Calu3 (cell line): ENCODE measurements at regions of chr12 and their contacts with region 1.

Region 1: GRCh38 chr12:97943364-97943763 is 480.8 kb downstream of the RMST start:
- DNase-seq: no peak
- H3K4me3 Mint-ChIP-seq: no peak overlapping the region
- H3K27ac Mint-ChIP-seq: peak overlapping the region; percentile 98
- H3K4me1 Mint-ChIP-seq: peaks cover 56% of the 10 kb centered on the region
- H3K27me3 Mint-ChIP-seq: no peaks in the 10 kb centered on the region
- CTCF ChIP-seq: no peak

Region 2: GRCh38 chr12:97148941-97149559 is 794.3 kb before region 1 on chr12:
- CTCF ChIA-PET with region 1: no interaction called
- intact Hi-C with region 1: loop called (anchors 1 kb)
- DNase-seq: peak; percentile 87
- H3K4me3 Mint-ChIP-seq: no peak overlapping the region
- H3K27ac Mint-ChIP-seq: no peak overlapping the region
- H3K4me1 Mint-ChIP-seq: no peaks in the 10 kb centered on the region
- H3K27me3 Mint-ChIP-seq: peaks cover 22% of the 10 kb centered on the region
- CTCF ChIP-seq: peak; percentile 81

Region 3: GRCh38 chr12:97568458-97569180 is 374.7 kb before region 1 on chr12:
- CTCF ChIA-PET with region 1: no interaction called
- intact Hi-C with region 1: loop called (anchors 2 kb)
- DNase-seq: peak; percentile 58
- H3K4me3 Mint-ChIP-seq: peak overlapping the region; percentile 60
- H3K27ac Mint-ChIP-seq: peak overlapping the region; percentile 99
- H3K4me1 Mint-ChIP-seq: peaks cover 60% of the 10 kb centered on the region
- H3K27me3 Mint-ChIP-seq: no peaks in the 10 kb centered on the region
- CTCF ChIP-seq: no peak

Region 4: GRCh38 chr12:97716356-97716755 is 227.0 kb before region 1 on chr12:
- CTCF ChIA-PET with region 1: no interaction called
- intact Hi-C with region 1: loop called (anchors 5 kb)
- DNase-seq: peak; percentile 30
- H3K4me3 Mint-ChIP-seq: no peak overlapping the region
- H3K27ac Mint-ChIP-seq: no peak overlapping the region
- H3K4me1 Mint-ChIP-seq: peaks cover 44% of the 10 kb centered on the region
- H3K27me3 Mint-ChIP-seq: no peaks in the 10 kb centered on the region
- CTCF ChIP-seq: peak; percentile 56

Region 5: DNA sequence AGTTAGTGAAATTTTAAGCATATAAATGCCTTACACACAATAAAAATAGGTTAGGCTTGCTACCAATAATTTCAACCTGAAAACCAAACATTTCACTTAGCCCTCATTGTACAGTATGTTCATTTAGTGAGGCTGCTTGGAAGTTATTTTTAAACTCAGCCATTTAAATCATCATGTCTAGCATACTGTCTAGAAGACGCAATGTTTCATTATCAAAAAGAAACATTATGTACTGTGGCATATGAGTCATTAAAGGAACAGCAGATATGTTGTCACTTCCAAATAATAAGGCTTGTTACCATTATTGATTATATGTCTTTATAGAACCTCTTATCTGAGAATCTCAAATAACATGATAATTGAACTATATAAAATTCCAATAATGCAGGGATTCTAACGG is 176.0 kb before region 1 on chr12:
- CTCF ChIA-PET with region 1: no interaction called
- intact Hi-C with region 1: loop called (anchors 5 kb)
- DNase-seq: no peak
- H3K4me3 Mint-ChIP-seq: no peak overlapping the region
- H3K27ac Mint-ChIP-seq: no peak overlapping the region
- H3K4me1 Mint-ChIP-seq: peaks cover 22% of the 10 kb centered on the region
- H3K27me3 Mint-ChIP-seq: no peaks in the 10 kb centered on the region
- CTCF ChIP-seq: no peak

Region 6: DNA sequence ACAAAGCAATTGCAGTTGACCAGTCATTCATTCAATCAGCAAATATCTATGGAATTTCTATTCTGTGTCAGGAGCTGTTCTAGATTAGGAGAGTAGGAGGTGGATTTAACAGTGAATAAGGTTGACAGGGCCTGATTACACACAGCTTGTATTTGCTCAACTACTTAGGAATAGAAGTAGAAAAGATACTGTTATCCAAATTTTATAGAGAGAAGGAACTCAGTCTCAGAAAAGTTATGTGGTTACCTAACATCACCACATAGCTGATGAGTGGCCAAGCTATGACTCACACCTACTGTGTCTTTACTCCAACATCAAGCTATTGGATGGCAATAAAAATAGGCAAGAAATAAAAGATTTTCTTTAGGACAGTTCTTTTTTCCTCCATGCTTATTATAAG is 106.0 kb before region 1 on chr12:
- CTCF ChIA-PET with region 1: no interaction called
- intact Hi-C with region 1: loop called (anchors 5 kb)
- DNase-seq: peak; percentile 24
- H3K4me3 Mint-ChIP-seq: no peak overlapping the region
- H3K27ac Mint-ChIP-seq: no peak overlapping the region
- H3K4me1 Mint-ChIP-seq: peaks cover 22% of the 10 kb centered on the region
- H3K27me3 Mint-ChIP-seq: no peaks in the 10 kb centered on the region
- CTCF ChIP-seq: no peak

Region 7: GRCh38 chr12:97995559-97995958 is 52.2 kb after region 1 on chr12:
- CTCF ChIA-PET with region 1: no interaction called
- intact Hi-C with region 1: no loop called
- DNase-seq: no peak
- H3K4me3 Mint-ChIP-seq: no peak overlapping the region
- H3K27ac Mint-ChIP-seq: no peak overlapping the region
- H3K4me1 Mint-ChIP-seq: no peaks in the 10 kb centered on the region
- H3K27me3 Mint-ChIP-seq: no peaks in the 10 kb centered on the region
- CTCF ChIP-seq: no peak

Region 8: GRCh38 chr12:98503592-98504367 is 560.4 kb after region 1 on chr12:
- CTCF ChIA-PET with region 1: no interaction called
- intact Hi-C with region 1: loop called (anchors 2 kb)
- DNase-seq: peak; percentile 96
- H3K4me3 Mint-ChIP-seq: peak overlapping the region; percentile 70
- H3K27ac Mint-ChIP-seq: peak overlapping the region; percentile 100
- H3K4me1 Mint-ChIP-seq: peaks cover 43% of the 10 kb centered on the region
- H3K27me3 Mint-ChIP-seq: peaks cover 15% of the 10 kb centered on the region
- CTCF ChIP-seq: no peak